Prostate gland (tissue), 2 donors: ENCODE measurements at regions of chr10 and their contacts with region 1.

Region 1: GRCh38 chr10:96292971-96293920 is 11.0 kb upstream of the DNTT start:
- DNase-seq: peak; percentile 15
- H3K4me3 ChIP-seq: no peak overlapping the region
- H3K27ac ChIP-seq: no peak overlapping the region
- H3K4me1 ChIP-seq: no peaks in the 10 kb centered on the region
- H3K27me3 ChIP-seq: no peaks in the 10 kb centered on the region
- CTCF ChIP-seq: peak in 3 of 4 experiments; percentile 40 to 78 (median 78)
- POLR2A ChIP-seq: no peak

Region 2: DNA sequence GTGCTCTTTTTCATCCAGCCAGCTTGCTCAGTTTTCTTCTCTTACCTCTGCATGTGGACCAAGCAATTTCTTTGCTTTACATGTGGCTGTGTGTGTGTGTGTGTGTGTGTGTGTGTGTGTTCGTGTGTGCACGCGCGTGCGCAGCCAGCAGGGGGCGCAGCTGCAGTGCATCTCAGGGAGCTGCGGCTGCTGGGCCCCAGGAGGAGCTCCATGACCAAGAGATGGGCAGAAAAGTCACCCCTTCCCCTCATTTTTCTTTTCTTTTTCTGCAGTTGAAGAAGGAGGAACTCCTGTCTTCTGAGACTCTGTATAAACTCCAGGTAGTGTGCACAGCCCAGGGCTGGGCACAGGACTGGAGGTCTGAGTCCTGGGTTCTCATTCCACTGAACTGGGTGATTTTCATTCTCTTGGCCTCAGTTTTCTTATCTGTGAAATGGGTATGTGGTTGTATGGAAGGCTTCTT is 63.6 kb before region 1 on chr10:
- intact Hi-C with region 1: loop called (anchors 1 kb)
- DNase-seq: peak; percentile 78
- H3K4me3 ChIP-seq: no peak overlapping the region
- H3K27ac ChIP-seq: no peak overlapping the region
- H3K4me1 ChIP-seq: no peaks in the 10 kb centered on the region
- H3K27me3 ChIP-seq: no peaks in the 10 kb centered on the region
- CTCF ChIP-seq: peak; percentile 76 to 95 (median 94)
- POLR2A ChIP-seq: no peak